ENCODE measurements at regions of chr9 and their contacts with region 1.

Region 1: GRCh38 chr9:13431222-13431536 is 151.7 kb upstream of the MPDZ start:
- DNase-seq: no peak
- H3K4me3 ChIP-seq: no peak overlapping the region
- H3K27ac ChIP-seq: peak overlapping the region; percentile 26 to 35
- H3K4me1 ChIP-seq: no peaks in the 10 kb centered on the region
- H3K27me3 ChIP-seq: no peaks in the 10 kb centered on the region
- CTCF ChIP-seq: no peak
- POLR2A ChIP-seq: no peak

Region 2: DNA sequence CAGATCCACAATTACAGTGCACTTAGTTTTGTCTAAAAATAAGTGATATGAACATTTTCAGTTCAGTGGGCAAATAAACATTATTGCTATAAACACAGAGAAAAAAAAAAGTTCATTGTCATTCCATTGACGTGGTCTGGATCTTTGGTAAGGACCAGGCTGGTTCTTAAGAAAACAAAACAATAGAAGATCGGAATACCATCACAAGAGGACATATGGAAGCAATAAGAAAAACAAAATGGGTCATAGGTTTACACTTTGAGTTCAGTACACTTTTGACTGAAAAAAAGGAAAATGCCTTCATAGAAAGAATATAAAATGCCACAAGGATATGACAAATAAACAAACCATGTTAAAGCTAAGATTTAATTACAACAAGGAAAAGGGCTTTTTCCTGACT is 1027.5 kb before region 1 on chr9:
- intact Hi-C with region 1: no loop called
- DNase-seq: no peak
- H3K4me3 ChIP-seq: no peak overlapping the region
- H3K27ac ChIP-seq: no peak overlapping the region
- H3K4me1 ChIP-seq: no peaks in the 10 kb centered on the region
- H3K27me3 ChIP-seq: no peaks in the 10 kb centered on the region
- CTCF ChIP-seq: no peak
- POLR2A ChIP-seq: no peak

Region 3: DNA sequence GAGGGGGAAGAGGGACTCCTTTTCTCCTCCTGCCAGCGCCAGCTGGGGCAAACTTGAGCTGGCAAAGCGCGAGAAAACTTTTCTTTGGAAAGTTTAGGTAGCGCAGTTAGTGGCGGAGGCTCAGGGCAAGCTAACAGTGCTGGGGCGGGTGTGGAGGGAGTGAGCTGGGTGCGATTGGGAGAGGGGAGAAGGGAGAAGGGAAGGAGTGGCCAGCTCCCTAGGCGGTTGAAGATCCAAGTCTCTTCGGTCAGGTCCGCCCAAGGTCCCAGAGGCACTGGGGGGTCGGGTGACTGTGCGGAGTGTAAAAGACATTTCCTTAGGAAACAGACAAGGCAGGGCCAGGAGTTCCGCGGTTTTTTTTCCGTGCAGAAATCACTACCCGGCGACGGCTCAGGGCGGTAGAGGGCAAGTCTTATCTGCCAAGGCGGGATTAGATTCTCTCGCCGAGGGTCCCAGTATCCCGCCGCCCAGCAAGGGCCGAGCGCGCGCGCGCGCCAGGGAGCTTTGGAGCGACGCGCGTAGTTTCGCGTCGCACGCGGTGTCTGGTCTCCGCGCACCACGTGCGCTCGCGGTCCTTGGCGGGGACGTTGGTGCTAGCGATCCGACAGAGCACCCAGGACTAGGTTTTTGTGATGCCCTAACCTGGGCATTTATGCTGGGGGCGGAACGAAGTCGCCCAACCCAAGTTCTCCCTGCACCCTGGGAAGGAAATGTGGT is 916.4 kb after region 1 on chr9:
- intact Hi-C with region 1: loop called (anchors 10 kb)
- DNase-seq: peak in 1 of 2 donors; percentile 76
- H3K4me3 ChIP-seq: peak overlapping the region; percentile 55 to 70 (median 55)
- H3K27ac ChIP-seq: peak overlapping the region; percentile 92 to 95
- H3K4me1 ChIP-seq: no peaks in the 10 kb centered on the region
- H3K27me3 ChIP-seq: peaks cover 0 to 34% of the 10 kb centered on the region in 2 donors
- CTCF ChIP-seq: no peak
- POLR2A ChIP-seq: peak; percentile 21

Region 4: GRCh38 chr9:14400658-14400995 is 969.4 kb after region 1 on chr9:
- intact Hi-C with region 1: no loop called
- DNase-seq: peak in 1 of 2 donors; percentile 26
- H3K4me3 ChIP-seq: peak overlapping the region in 1 of 3 donors; percentile 23
- H3K27ac ChIP-seq: peak overlapping the region in 1 of 2 donors; percentile 38
- H3K4me1 ChIP-seq: no peaks in the 10 kb centered on the region
- H3K27me3 ChIP-seq: no peaks in the 10 kb centered on the region
- CTCF ChIP-seq: peak; percentile 27 to 32 (median 28)
- POLR2A ChIP-seq: no peak

Region 5: GRCh38 chr9:14428781-14429230 is 997.6 kb after region 1 on chr9:
- intact Hi-C with region 1: loop called (anchors 10 kb)
- DNase-seq: peak; percentile 40 to 72
- H3K4me3 ChIP-seq: no peak overlapping the region
- H3K27ac ChIP-seq: no peak overlapping the region
- H3K4me1 ChIP-seq: no peaks in the 10 kb centered on the region
- H3K27me3 ChIP-seq: no peaks in the 10 kb centered on the region
- CTCF ChIP-seq: peak; percentile 32 to 53 (median 49)
- POLR2A ChIP-seq: no peak